ENCODE measurements at regions of chr17 and their contacts with region 1.

Region 1: DNA sequence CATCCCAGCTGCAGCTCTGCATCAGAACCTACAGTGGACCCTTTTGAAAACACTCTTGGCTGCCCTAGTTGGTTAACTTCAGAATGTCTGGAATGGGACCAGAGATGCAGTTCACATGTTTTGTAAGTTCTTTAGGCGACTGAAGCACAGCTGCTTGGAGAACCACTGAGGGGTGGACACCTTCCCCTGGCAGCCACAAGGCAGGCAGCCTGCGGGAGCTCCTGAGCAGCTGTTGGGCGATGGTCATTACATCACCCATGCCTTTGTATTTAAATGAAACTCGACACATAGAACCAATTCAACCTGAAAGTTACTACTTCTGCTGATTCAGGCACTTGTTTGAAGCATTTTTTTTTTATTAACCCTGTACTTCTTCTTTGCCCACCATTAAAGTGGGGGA is 151.5 kb downstream of the LGALS9B start:
- DNase-seq: no peak
- ATAC-seq: no peak

Region 2: GRCh38 chr17:19992803-19993713 is 322.8 kb before region 1 on chr17:
- intact Hi-C with region 1: loop called (anchors 5 kb)
- DNase-seq: peak; percentile 93
- ATAC-seq: peak; percentile 99